AG04449 (cell line): ENCODE measurements at regions of chr1 and their contacts with region 1.

Region 1: DNA sequence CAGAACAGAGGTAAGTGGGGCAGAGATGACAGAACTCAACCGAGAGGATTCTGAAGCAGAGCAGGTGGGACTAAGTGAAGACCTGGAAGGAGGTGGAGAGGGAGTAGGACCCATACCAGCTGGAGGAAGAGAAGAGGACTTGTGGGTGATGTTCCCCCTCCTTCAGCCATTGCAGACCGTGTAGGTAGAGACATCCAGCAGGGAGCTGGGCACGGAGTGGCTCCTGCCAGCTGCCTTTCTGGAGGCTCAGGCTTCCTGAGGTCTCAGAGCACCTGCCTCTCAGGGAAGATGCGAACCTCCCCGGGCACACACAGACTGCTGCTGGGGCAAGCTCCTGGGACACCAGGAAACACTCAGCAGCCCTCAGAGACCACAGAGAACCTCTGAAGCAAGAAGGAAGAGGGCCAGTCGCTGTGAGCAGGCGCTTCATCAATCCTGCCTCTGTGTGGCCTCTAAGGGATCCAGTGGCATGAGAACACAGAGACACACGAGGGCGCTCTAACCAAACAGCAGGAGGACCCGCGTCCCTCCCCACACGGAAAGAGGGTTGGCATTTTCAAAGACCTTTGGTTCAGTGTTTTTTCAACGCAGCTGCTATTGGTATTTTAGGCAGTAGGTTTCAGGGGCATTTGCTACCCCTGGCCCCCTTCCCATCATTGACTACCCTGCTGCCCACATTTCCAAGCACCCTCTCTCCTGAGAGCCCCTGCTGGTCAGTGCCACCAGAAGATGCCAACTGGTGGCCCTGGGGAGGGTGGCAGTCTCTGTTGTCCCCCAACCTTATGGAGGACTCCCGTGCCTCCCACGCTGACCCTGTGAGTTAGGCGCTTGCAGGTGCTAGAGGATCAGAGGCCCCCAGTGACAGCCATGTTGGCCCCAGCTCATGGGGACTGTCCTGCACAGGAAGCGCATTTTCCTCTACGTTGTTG is 89.6 kb upstream of the EDN2 start:
- DNase-seq: peak; percentile 34
- H3K4me3 ChIP-seq: no peak overlapping the region
- CTCF ChIP-seq: peak; percentile 93

Region 2: GRCh38 chr1:41455479-41456332 is 118.3 kb before region 1 on chr1:
- CTCF ChIA-PET with region 1: no interaction called
- POLR2A ChIA-PET with region 1: no interaction called
- DNase-seq: no peak
- H3K4me3 ChIP-seq: no peak overlapping the region
- CTCF ChIP-seq: no peak

Region 3: DNA sequence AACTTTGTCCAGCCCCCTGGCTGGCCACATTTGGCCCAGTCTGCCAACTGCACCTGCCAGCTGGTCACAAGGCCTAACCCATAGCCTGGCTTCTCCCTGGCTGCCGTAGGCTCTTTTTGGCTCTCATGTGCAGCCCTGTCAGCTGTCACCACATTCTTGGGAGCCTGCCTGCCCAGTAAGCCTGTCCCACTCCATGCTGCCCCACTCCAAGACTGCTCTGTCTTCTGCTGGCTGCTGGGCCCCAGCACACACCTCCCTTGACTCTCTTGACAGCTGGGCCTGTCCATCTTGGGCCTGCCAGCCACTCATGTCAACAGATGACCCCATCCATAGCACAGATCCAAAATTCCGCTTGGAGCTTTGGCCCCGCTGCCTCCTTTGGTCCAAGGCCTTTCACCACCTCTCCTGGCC is 15.3 kb before region 1 on chr1:
- CTCF ChIA-PET with region 1: interaction called, 24 read pairs
- POLR2A ChIA-PET with region 1: no interaction called
- DNase-seq: no peak
- H3K4me3 ChIP-seq: no peak overlapping the region
- CTCF ChIP-seq: no peak

Region 4: GRCh38 chr1:41662061-41662764 is 88.2 kb after region 1 on chr1:
- CTCF ChIA-PET with region 1: interaction called, 14 read pairs
- POLR2A ChIA-PET with region 1: no interaction called
- DNase-seq: no peak
- H3K4me3 ChIP-seq: peak overlapping the region; percentile 78
- CTCF ChIP-seq: no peak

Region 5: GRCh38 chr1:41773144-41773591 is 199.1 kb after region 1 on chr1:
- CTCF ChIA-PET with region 1: interaction called, 10 read pairs
- POLR2A ChIA-PET with region 1: no interaction called
- DNase-seq: peak; percentile 93
- H3K4me3 ChIP-seq: no peak overlapping the region
- CTCF ChIP-seq: no peak

Region 6: DNA sequence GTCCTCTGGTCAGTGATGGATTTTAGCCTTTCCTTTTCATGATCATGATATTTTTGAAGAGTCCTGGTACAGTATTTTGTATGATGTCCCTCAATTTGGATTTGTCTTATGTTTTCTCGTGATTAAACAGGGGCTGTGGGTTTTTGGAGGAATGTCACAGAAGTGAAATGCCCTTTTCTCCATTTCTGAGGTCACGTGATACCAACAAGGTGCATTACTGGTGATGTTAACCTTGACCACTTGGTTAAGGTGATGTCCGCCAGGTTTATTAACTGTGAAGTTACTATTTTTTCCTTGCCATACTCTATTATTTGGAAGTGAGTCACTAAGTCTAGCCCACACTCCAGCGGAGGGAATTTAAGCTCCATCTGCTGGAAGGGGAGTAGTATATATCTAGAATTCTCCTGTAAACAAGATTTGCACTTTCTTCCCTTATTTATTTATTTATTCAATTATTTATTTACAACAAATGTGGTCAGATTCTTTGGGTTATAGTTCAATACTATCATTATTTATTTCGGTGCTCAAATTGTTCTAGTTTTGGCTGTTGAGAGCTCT is 221.2 kb after region 1 on chr1:
- CTCF ChIA-PET with region 1: interaction called, 88 read pairs
- POLR2A ChIA-PET with region 1: no interaction called
- DNase-seq: no peak
- H3K4me3 ChIP-seq: no peak overlapping the region
- CTCF ChIP-seq: peak; percentile 43

Region 7: DNA sequence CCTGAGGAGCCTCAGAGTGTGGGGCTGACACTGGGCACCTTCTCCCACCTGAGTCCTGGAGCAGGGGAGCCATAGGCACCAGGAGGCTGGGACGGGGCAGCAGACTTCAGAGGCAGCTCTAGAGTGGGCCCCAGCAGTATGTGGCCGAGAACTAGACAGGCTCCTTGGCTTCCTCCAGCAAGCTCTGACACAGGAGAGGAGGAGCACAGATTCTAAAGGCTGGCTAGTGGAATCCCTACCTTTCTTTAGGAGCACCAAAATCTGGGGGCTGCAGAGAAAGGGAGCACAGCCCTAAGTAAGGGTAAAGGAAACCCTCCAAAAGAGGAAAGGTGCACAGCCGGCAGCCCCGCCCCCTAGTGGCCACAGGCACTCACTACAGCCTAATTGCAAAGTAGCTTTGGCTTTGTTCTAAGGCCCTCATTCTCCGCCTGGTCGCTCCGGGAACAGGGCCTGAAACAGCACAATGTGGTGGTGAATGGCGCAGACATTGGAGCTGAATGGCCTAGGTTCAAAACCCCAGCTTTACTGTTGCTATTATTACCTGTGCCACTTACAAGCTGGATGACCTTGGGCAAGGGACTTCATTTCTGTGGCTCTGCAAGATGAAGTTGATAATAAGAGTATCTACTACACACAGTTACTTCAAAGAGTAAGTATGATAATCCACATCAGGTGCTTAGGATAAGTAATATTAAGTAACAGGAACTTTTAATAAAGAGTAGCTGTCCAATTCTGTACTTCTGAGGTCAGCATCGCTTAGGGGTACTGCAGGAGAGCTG is 599.3 kb after region 1 on chr1:
- CTCF ChIA-PET with region 1: interaction called, 11 read pairs
- POLR2A ChIA-PET with region 1: no interaction called
- DNase-seq: no peak
- H3K4me3 ChIP-seq: no peak overlapping the region
- CTCF ChIP-seq: peak; percentile 93